PC-9 (cell line): ENCODE measurements at regions of chr3 and their contacts with region 1.

Region 1: DNA sequence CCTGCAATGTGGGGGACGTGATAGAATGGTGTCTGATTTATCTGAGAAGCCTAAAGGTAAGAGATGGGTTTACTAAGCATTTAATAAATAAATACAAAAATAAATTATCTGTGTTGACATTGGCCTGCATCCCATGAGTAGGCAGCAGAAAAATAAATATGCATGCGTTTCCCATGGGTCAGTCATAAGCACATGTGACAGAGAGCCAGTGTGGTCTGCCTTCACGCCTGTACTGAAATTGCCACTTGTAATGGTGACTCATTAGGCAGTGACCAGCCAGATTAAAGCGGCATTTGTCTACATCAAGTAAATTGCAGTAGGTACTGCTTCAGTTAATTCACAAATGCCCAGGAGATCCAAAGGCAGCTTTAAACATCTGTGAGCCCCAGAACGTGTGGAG is 399.6 kb downstream of the NAALADL2 start:
- DNase-seq: no peak
- H3K4me3 ChIP-seq: no peak overlapping the region
- H3K27ac ChIP-seq: no peak overlapping the region
- H3K4me1 ChIP-seq: no peaks in the 10 kb centered on the region
- H3K27me3 ChIP-seq: no peaks in the 10 kb centered on the region
- CTCF ChIP-seq: no peak

Region 2: DNA sequence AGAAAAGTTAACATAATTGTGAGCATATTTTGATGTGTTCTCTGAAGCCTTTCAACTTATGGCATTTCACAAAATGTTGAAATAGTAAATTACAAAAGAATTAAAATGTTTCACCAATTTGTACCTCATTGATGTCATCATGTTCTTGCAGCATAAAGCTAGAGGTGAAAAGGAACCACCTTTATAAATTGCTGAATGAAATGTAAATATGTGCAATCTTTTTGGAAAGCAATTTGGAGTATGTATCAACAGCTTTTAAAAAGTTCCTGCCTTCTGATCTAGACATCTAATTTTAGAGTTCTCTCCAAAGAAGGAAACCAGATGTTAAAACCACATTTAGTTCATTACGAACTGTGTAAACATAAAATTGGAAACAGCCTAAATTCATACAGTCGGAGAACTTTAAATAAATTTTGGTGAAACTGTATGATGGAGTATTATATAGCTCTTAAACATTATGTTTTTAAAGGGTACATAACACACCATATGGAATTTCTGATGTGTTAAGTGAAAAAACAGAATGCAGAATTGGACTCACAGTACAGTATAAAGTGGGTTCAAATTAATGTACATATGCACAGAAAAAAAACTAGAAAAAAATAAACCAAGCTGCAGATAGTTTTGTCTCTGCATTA is 710.8 kb before region 1 on chr3:
- CTCF ChIA-PET with region 1: no interaction called
- POLR2A ChIA-PET with region 1: interaction called, 12 read pairs
- intact Hi-C with region 1: no loop called
- DNase-seq: no peak
- H3K4me3 ChIP-seq: no peak overlapping the region
- H3K27ac ChIP-seq: no peak overlapping the region
- H3K4me1 ChIP-seq: no peaks in the 10 kb centered on the region
- H3K27me3 ChIP-seq: no peaks in the 10 kb centered on the region
- CTCF ChIP-seq: no peak

Region 3: GRCh38 chr3:175178816-175179454 is 79.8 kb before region 1 on chr3:
- CTCF ChIA-PET with region 1: no interaction called
- POLR2A ChIA-PET with region 1: no interaction called
- intact Hi-C with region 1: no loop called
- DNase-seq: peak in 1 of 2 experiments; percentile 82
- H3K4me3 ChIP-seq: no peak overlapping the region
- H3K27ac ChIP-seq: no peak overlapping the region
- H3K4me1 ChIP-seq: peaks cover 16% of the 10 kb centered on the region
- H3K27me3 ChIP-seq: no peaks in the 10 kb centered on the region
- CTCF ChIP-seq: no peak